Activated CD4-positive, alpha-beta memory T cell treated with anti-CD3 and anti-CD28 coated beads for 36 hours (primary cell): ENCODE measurements at regions of chr11 and their contacts with region 1.

Region 1: DNA sequence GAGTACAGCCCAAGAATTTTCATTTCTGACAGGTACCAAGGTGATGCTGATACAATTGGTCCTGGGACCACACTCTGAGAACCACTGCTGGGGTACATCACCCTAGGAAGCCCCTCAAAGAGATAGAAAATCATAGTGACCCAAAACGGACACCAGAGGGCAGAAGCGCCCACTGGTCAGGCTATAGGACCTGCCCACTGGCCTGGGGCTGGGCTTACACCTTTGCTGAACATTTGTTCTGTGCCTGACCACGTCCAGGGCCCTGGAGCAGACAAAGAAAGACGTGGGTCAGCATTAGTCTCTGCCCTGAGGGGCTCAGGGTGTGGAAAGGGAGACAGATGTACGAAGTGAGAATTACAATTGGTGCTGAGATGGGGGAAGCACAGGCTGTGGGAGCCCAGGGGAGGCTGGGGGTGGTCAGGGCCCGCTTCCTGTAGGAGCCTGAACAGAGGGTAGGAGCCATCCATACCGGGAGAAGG is 14.4 kb upstream of the SERPINH1 start:
- DNase-seq: peak; percentile 56
- H3K4me3 Mint-ChIP-seq: no peak overlapping the region
- H3K27ac Mint-ChIP-seq: no peak overlapping the region
- H3K4me1 Mint-ChIP-seq: peaks cover 3% of the 10 kb centered on the region
- H3K27me3 Mint-ChIP-seq: no peaks in the 10 kb centered on the region

Region 2: DNA sequence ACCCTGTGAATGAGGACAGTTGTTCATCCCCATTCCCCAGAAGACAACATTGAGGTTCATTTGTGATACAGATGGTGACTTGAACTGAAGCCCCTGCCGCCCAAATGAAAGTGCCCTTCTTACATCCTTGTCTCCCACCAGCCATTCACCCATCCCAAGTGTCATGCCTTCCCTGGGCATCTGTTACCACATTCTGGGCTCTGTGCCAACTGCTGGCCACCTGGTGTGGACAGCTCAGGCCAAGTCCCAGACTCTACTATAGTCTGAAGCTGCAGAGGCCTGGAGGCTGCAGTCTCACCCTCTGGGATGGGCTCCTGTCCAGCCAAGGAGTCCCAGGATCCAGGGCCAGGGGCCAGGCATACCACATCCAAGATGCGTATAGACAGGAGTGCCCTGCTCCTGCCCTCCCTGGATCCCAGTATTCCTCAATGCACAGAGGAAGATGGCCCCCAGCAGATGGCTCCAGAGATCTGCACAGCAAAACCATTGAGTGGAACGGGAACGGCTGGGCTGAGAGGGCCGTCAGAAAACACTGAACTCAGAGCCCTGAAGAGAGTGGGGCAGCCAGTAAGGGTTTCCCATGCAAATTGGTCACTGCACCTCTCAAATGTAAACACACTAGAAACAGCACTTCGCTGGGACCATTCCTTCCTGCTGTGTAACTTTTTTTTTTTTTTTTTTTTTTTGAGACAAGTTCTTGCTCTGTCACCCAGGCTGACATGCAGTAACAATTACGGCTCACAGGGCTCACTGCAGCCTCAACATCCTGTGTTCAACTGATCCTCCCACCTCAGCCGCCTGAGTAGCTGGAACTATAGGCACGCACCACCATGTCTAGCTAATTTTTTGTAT is 219.0 kb before region 1 on chr11:
- CTCF ChIA-PET with region 1: no interaction called
- POLR2A ChIA-PET with region 1: no interaction called
- intact Hi-C with region 1: no loop called
- DNase-seq: peak; percentile 77
- H3K4me3 Mint-ChIP-seq: no peak overlapping the region
- H3K27ac Mint-ChIP-seq: peak overlapping the region; percentile 70
- H3K4me1 Mint-ChIP-seq: peaks cover 60% of the 10 kb centered on the region
- H3K27me3 Mint-ChIP-seq: no peaks in the 10 kb centered on the region

Region 3: DNA sequence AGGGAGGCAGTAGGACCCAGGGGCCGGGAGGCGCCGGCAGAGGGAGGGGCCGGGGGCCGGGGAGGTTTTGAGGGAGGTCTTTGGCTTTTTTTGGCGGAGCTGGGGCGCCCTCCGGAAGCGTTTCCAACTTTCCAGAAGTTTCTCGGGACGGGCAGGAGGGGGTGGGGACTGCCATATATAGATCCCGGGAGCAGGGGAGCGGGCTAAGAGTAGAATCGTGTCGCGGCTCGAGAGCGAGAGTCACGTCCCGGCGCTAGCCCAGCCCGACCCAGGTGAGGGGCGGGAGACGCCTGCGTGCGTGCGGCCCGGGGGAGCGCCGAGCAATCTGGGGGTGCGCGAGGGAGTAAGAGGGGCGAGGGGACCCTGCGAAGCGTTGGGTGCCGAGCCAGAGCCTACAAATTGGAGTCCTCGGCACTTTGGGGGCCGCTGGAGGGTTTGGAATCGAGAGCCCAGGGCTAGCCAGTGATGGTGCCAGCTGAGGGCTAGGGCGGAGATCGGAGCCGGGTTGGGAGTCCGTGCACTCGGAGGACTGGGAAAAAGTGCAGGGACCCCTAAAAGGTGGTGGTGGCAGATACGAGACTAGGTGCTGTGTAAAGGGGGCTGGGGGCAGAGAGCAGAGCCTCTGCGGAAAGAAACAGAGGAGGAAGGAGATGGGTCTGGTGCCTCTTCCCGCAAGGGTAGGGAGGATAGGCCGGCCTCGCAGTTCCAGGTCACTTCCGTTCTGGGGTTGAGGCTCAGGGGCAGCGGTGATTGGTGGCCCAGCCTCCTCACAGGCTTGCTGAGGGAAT is 14.6 kb after region 1 on chr11 and contains the start of gene SERPINH1:
- CTCF ChIA-PET with region 1: interaction called, 4 read pairs
- POLR2A ChIA-PET with region 1: no interaction called
- intact Hi-C with region 1: loop called (anchors 2 kb)
- DNase-seq: peak; percentile 89
- H3K4me3 Mint-ChIP-seq: peak within 1 kb of the TSS; percentile 99
- H3K27ac Mint-ChIP-seq: peak within 1 kb of the TSS; percentile 99
- H3K4me1 Mint-ChIP-seq: peaks cover 32% of the 10 kb centered on the region
- H3K27me3 Mint-ChIP-seq: no peaks in the 10 kb centered on the region
- total RNA-seq, gene SERPINH1: 15.2 to 17.4 TPM

Region 4: DNA sequence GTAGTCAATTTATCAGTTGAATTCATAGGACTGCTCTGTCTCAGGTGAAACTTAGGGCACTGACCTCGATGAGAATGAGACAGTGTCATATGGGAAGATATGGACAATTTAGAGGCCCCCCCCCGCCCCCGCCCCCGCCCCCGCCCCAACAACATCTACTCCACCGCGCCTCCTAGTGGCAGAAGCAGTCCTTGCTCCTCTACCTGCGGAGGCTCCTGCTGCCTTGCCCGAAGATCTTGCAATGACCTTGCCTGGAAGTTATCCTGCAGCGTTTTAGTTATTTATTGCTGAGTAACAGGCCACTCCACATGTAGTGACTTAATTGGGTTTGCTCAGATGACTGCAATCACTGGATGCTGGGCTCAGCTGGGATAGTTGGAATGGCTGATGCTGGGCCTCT is 29.6 kb after region 1 on chr11:
- CTCF ChIA-PET with region 1: interaction called, 12 read pairs
- POLR2A ChIA-PET with region 1: interaction called, 3 read pairs
- intact Hi-C with region 1: loop called (anchors 5 kb)
- DNase-seq: peak; percentile 66
- H3K4me3 Mint-ChIP-seq: no peak overlapping the region
- H3K27ac Mint-ChIP-seq: no peak overlapping the region
- H3K4me1 Mint-ChIP-seq: peaks cover 4% of the 10 kb centered on the region
- H3K27me3 Mint-ChIP-seq: no peaks in the 10 kb centered on the region

Region 5: GRCh38 chr11:75582895-75583717 is 35.5 kb after region 1 on chr11:
- CTCF ChIA-PET with region 1: interaction called, 5 read pairs
- POLR2A ChIA-PET with region 1: no interaction called
- intact Hi-C with region 1: loop called (anchors 5 kb)
- DNase-seq: peak; percentile 78
- H3K4me3 Mint-ChIP-seq: peak overlapping the region; percentile 78
- H3K27ac Mint-ChIP-seq: peak overlapping the region; percentile 76
- H3K4me1 Mint-ChIP-seq: peaks cover 16% of the 10 kb centered on the region
- H3K27me3 Mint-ChIP-seq: no peaks in the 10 kb centered on the region